Activated naive CD4-positive, alpha-beta T cell treated with anti-CD3 and anti-CD28 coated beads, Interleukin-2, amount 10 ng/mL, durations not matched to agents 7 days and 5 days (primary cell): ENCODE measurements at regions of chr14 and their contacts with region 1.

Region 1: GRCh38 chr14:23631702-23632460 is 4.3 kb upstream of the DHRS2 start:
- DNase-seq: peak; percentile 71
- H3K4me3 Mint-ChIP-seq: no peak overlapping the region
- H3K27ac Mint-ChIP-seq: no peak overlapping the region
- H3K4me1 Mint-ChIP-seq: peaks cover 5% of the 10 kb centered on the region
- H3K27me3 Mint-ChIP-seq: peaks cover 25% of the 10 kb centered on the region

Region 2: DNA sequence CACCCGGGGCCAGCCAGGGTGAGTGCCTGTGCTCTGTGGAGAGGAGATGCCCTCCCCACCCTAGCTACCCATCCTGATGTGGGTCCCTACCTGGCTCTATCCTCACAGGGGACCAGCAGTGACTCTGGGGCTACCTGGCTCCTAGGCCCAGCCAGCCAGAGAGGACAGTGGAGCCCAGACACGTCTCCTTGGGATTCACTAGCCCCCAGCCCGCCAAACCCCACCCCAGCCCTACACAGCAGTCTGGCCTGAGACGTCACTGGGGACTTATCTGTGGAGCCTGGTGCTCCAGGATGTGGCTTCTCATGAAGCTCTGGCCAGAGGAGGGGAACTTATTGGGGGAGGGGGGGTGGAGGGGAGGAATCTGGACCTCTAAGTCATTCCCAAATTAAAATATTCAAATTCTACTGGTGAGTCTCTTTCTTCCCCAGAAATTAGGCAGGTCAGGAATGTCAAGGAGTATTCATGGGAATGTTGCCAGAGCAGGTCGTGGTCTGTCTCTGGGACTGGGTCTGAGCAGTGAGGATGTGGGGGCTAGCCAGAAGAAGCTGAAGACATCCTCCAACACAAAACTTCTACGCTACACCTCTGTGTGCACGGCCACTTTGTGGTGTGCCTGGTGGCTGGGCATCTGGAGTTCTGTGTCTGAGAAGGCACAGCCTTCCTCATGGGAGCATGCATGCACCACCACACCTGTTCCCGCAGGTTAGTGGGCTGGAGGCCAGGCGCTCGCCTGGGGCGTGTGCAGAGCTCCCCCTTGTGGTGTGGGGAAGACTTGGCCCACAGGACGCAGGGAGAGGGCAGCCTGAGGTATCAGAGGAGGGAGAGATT is 252.3 kb before region 1 on chr14:
- CTCF ChIA-PET with region 1: no interaction called
- DNase-seq: peak; percentile 76
- H3K4me3 Mint-ChIP-seq: no peak overlapping the region
- H3K27ac Mint-ChIP-seq: no peak overlapping the region
- H3K4me1 Mint-ChIP-seq: no peaks in the 10 kb centered on the region
- H3K27me3 Mint-ChIP-seq: peaks cover 58% of the 10 kb centered on the region

Region 3: DNA sequence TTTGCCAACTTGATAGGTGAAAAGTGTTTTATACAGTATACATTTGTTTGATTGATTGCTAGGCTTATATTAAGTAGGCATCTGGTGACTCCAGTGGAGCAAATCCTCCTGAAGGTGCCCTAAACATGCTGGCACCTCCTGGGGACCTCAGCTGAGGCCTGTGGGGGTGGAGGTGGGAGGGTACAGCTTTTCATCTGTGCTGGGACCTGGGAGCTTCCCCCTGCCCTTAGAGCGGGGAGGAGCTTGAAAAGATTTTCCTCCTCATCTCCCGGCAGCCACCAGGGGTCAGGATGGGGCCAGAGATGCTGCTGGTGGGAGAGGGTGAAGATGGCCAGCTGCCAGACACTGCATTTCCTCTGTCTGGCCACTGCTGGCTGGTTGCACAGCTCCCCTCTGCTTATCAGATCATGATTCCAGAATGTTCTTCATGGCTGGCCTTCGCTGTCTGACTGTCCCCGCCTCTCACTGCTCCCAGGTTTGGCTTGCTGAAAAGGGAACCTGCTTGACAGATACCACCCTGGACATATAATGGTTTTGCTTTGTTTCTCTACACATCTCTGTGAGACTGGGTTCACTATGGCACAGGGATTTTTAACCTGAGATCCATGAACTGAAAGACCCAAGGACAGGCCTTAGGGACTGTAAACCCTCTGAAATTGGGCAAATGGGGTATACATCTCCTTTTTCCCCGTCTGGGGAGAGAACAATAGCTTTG is 42.8 kb before region 1 on chr14:
- CTCF ChIA-PET with region 1: interaction called, 33 read pairs
- DNase-seq: peak; percentile 85
- H3K4me3 Mint-ChIP-seq: no peak overlapping the region
- H3K27ac Mint-ChIP-seq: no peak overlapping the region
- H3K4me1 Mint-ChIP-seq: no peaks in the 10 kb centered on the region
- H3K27me3 Mint-ChIP-seq: peaks cover 29% of the 10 kb centered on the region

Region 4: GRCh38 chr14:23621204-23621931 is 10.5 kb before region 1 on chr14:
- CTCF ChIA-PET with region 1: interaction called, 25 read pairs
- DNase-seq: no peak
- H3K4me3 Mint-ChIP-seq: no peak overlapping the region
- H3K27ac Mint-ChIP-seq: no peak overlapping the region
- H3K4me1 Mint-ChIP-seq: no peaks in the 10 kb centered on the region
- H3K27me3 Mint-ChIP-seq: peaks cover 12% of the 10 kb centered on the region

Region 5: DNA sequence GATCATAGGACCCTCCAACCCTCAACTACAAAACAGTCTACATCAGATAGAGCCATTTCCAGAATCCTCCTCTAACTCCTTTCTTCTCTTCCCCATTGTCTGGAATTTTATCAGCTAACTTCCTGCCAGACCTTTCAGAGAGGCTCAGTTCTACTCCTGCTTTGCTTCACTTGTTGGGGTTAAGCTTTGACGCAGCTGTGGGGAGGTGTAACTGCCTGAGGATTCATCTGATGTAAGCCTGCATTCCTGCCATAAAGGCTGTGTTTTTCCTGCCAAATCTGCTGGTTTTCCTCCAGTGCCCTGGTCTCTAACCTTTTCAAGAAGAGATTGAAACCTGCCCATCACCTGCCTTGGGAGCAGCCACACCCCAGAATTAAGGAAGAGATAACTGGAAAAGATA is 21.2 kb after region 1 on chr14:
- CTCF ChIA-PET with region 1: interaction called, 19 read pairs
- DNase-seq: no peak
- H3K4me3 Mint-ChIP-seq: no peak overlapping the region
- H3K27ac Mint-ChIP-seq: no peak overlapping the region
- H3K4me1 Mint-ChIP-seq: no peaks in the 10 kb centered on the region
- H3K27me3 Mint-ChIP-seq: peaks cover 3% of the 10 kb centered on the region

Region 6: GRCh38 chr14:23929822-23930294 is 298.0 kb after region 1 on chr14:
- CTCF ChIA-PET with region 1: interaction called, 22 read pairs
- DNase-seq: peak; percentile 89
- H3K4me3 Mint-ChIP-seq: no peak overlapping the region
- H3K27ac Mint-ChIP-seq: no peak overlapping the region
- H3K4me1 Mint-ChIP-seq: no peaks in the 10 kb centered on the region
- H3K27me3 Mint-ChIP-seq: peaks cover 29% of the 10 kb centered on the region